ENCODE measurements at regions of chr2 and their contacts with region 1.

Region 1: GRCh38 chr2:10812362-10813162 is at the start of gene PDIA6:
- DNase-seq: peak; percentile 97
- H3K4me3 Mint-ChIP-seq: peak within 1 kb of the TSS; percentile 88
- H3K27ac Mint-ChIP-seq: peak within 1 kb of the TSS; percentile 90
- H3K4me1 Mint-ChIP-seq: peaks cover 34% of the 10 kb centered on the region
- H3K27me3 Mint-ChIP-seq: no peaks in the 10 kb centered on the region
- total RNA-seq, gene PDIA6: 176 to 181 TPM

Region 2: GRCh38 chr2:10680957-10681356 is 131.6 kb before region 1 on chr2:
- CTCF ChIA-PET with region 1: no interaction called
- POLR2A ChIA-PET with region 1: interaction called, 3 read pairs
- intact Hi-C with region 1: loop called (anchors 5 kb)
- DNase-seq: no peak
- H3K4me3 Mint-ChIP-seq: no peak overlapping the region
- H3K27ac Mint-ChIP-seq: peak overlapping the region; percentile 47
- H3K4me1 Mint-ChIP-seq: peaks cover 25% of the 10 kb centered on the region
- H3K27me3 Mint-ChIP-seq: no peaks in the 10 kb centered on the region